GM12878 (cell line): ENCODE measurements at regions of chr5 and their contacts with region 1.

Region 1: GRCh38 chr5:157948738-157949410 is 89.9 kb upstream of the CLINT1 start:
- DNase-seq: peak; percentile 44
- ATAC-seq: peak; percentile 100
- H3K4me3 ChIP-seq: no peak overlapping the region
- H3K27ac ChIP-seq: no peak overlapping the region
- H3K4me1 ChIP-seq: no peaks in the 10 kb centered on the region
- H3K27me3 ChIP-seq: no peaks in the 10 kb centered on the region
- CTCF ChIP-seq: peak; percentile 83 to 94 (median 84)
- EP300 ChIP-seq: no peak
- POLR2A ChIP-seq: no peak
- RAD21 ChIP-seq: peak; percentile 80

Region 2: DNA sequence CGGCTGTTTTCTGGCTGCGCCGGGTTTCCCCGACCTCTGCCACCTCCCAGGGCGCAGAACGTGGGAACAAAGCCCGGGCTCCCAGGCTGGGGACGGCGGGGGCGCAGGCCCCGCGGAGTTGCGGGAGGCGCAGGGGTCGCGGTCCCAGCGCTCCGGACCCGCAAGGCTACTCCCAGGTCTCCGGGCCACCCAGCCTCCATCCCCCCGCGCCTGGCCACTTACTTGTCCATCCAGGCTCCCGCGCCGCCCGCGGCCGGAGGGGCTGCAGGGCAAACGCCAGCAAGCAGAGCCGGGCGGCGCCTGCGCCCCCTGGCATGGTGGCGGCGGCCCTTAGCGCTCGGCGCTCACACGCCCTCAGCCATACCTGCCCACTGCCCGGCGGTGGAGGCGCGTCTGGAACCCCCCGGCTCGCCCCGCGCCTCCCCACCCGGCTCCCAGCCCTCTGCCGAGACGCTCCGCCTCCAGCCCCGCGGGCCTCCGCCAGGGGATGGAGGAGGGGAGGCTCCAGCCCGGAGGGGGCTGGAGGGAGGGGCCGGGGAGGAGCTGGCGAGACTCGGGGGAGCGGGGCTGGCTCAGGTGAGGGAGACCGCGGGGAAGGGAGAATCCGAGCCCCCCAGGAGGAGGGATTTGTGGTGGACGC is 373.4 kb before region 1 on chr5 and contains the start of gene ADAM19:
- CTCF ChIA-PET with region 1: no interaction called
- POLR2A ChIA-PET with region 1: no interaction called
- RAD21 ChIA-PET with region 1: no interaction called
- SMC1A ChIA-PET with region 1: no interaction called
- in situ Hi-C with region 1: no loop called
- intact Hi-C with region 1: no loop called
- DNase-seq: no peak
- ATAC-seq: peak; percentile 77
- H3K4me3 ChIP-seq: peak within 1 kb of the TSS; percentile 75
- H3K27ac ChIP-seq: peak within 1 kb of the TSS; percentile 67
- H3K4me1 ChIP-seq: peaks cover 51% of the 10 kb centered on the region
- H3K27me3 ChIP-seq: no peaks in the 10 kb centered on the region
- CTCF ChIP-seq: no peak
- EP300 ChIP-seq: no peak
- POLR2A ChIP-seq: peak; percentile 79
- RAD21 ChIP-seq: no peak
- polyA plus RNA-seq, gene ADAM19: 16.0 to 24.4 TPM

Region 3: GRCh38 chr5:157761690-157762621 is 186.9 kb before region 1 on chr5:
- CTCF ChIA-PET with region 1: interaction called, 58 read pairs
- POLR2A ChIA-PET with region 1: no interaction called
- RAD21 ChIA-PET with region 1: interaction called, 3 read pairs
- SMC1A ChIA-PET with region 1: interaction called, 19 read pairs
- in situ Hi-C with region 1: no loop called
- intact Hi-C with region 1: loop called (anchors 5 kb)
- DNase-seq: no peak
- ATAC-seq: peak; percentile 99
- H3K4me3 ChIP-seq: no peak overlapping the region
- H3K27ac ChIP-seq: no peak overlapping the region
- H3K4me1 ChIP-seq: 0 out of 2 replicates have a peak, but pooled peaks cover 3% of the 10 kb centered on the region
- H3K27me3 ChIP-seq: no peaks in the 10 kb centered on the region
- CTCF ChIP-seq: peak; percentile 71 to 81 (median 79)
- EP300 ChIP-seq: no peak
- POLR2A ChIP-seq: no peak
- RAD21 ChIP-seq: peak; percentile 73

Region 4: DNA sequence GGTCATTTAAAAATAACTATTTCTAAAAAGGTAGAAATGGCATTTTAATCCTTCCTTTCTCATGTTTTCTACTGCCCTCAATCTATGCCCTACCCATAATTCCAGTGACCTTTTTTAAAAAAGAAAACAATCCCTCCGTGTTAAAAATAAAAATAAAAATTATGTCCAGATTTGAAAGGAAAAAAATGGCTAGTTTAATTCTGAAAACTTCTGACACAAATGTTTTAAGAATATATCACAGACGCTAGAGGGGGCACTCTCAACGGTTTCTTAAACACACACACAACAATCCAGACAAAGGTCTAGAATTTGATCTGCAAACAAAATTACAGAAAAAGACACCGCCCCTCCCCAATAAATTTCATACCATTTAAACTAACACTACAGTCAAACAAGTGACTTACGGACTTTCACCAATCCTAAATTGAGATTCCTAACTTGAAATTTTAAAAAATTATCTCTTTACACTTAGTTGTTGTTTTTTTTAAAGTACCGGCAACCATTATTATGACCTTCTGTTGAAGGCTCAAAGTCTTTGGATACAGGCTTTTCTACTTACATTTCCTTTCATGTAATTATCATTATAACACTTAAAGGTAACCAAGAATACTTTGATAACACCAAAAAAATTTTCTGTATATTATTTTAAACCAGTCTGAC is 128.2 kb before region 1 on chr5:
- CTCF ChIA-PET with region 1: interaction called, 201 read pairs
- POLR2A ChIA-PET with region 1: no interaction called
- RAD21 ChIA-PET with region 1: interaction called, 63 read pairs
- SMC1A ChIA-PET with region 1: interaction called, 82 read pairs
- in situ Hi-C with region 1: loop called (anchors 5 kb)
- intact Hi-C with region 1: loop called (anchors 1 kb)
- DNase-seq: no peak
- ATAC-seq: peak; percentile 69
- H3K4me3 ChIP-seq: no peak overlapping the region
- H3K27ac ChIP-seq: no peak overlapping the region
- H3K4me1 ChIP-seq: no peaks in the 10 kb centered on the region
- H3K27me3 ChIP-seq: no peaks in the 10 kb centered on the region
- CTCF ChIP-seq: peak; percentile 39 to 56 (median 49); a peak in 5 of 6 replicates
- EP300 ChIP-seq: no peak
- POLR2A ChIP-seq: no peak
- RAD21 ChIP-seq: peak; percentile 63

Region 5: DNA sequence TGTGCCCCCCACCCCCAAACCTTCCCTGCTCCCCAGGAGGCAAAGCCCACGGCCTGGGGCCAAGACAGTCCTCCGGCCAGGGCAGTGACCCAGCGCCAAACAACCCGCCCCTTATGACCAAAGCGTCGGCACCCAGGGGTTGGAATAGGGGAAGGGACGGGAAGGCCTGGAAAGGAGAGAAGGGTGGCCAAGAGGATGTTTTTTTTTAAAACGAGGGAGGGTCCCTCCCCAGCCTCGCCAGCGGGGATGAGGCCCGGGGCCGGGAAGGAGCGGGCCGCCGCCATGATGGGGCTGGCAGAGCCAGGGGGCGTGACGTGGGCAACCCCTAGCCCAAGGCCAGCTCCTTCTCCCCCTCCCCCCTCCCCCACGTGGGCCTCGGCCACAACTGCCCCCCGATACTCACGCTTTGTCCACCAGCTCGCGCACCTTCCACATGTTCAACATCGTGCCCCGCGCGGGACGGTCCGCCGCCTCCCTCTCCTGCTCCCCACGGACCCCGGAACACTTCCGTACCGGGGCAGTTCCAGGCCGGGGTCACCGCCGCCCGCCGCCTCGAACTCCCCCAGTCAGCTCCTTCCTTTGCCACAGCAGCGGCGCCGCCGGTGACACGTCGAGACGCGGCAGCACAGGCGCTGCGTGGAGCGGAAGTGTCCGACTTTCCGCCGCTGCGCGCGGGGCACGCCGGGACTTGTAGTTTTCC is 90.2 kb before region 1 on chr5 and contains the start of gene CLINT1:
- CTCF ChIA-PET with region 1: interaction called, 106 read pairs
- POLR2A ChIA-PET with region 1: interaction called, 3 read pairs
- RAD21 ChIA-PET with region 1: interaction called, 66 read pairs
- SMC1A ChIA-PET with region 1: interaction called, 105 read pairs
- in situ Hi-C with region 1: no loop called
- intact Hi-C with region 1: loop called (anchors 1 kb)
- DNase-seq: no peak
- ATAC-seq: peak; percentile 69
- H3K4me3 ChIP-seq: peak within 1 kb of the TSS; percentile 87
- H3K27ac ChIP-seq: peak within 1 kb of the TSS; percentile 45
- H3K4me1 ChIP-seq: peaks cover 29% of the 10 kb centered on the region
- H3K27me3 ChIP-seq: no peaks in the 10 kb centered on the region
- CTCF ChIP-seq: no peak
- EP300 ChIP-seq: 0 out of 4 replicates have a peak, but pooled peaks of 1 of the 2 experiments have one; percentile 4
- POLR2A ChIP-seq: peak; percentile 82
- RAD21 ChIP-seq: no peak
- polyA plus RNA-seq, gene CLINT1: 30.0 to 40.2 TPM

Region 6: GRCh38 chr5:157924931-157925729 is 23.7 kb before region 1 on chr5:
- CTCF ChIA-PET with region 1: interaction called, 21 read pairs
- POLR2A ChIA-PET with region 1: no interaction called
- RAD21 ChIA-PET with region 1: interaction called, 27 read pairs
- SMC1A ChIA-PET with region 1: interaction called, 13 read pairs
- in situ Hi-C with region 1: no loop called
- intact Hi-C with region 1: no loop called
- DNase-seq: no peak
- ATAC-seq: peak; percentile 37
- H3K4me3 ChIP-seq: no peak overlapping the region
- H3K27ac ChIP-seq: no peak overlapping the region
- H3K4me1 ChIP-seq: no peaks in the 10 kb centered on the region
- H3K27me3 ChIP-seq: no peaks in the 10 kb centered on the region
- CTCF ChIP-seq: no peak
- EP300 ChIP-seq: no peak
- POLR2A ChIP-seq: no peak
- RAD21 ChIP-seq: no peak

Region 7: GRCh38 chr5:157961828-157962590 is 13.1 kb after region 1 on chr5:
- CTCF ChIA-PET with region 1: interaction called, 14 read pairs
- POLR2A ChIA-PET with region 1: no interaction called
- RAD21 ChIA-PET with region 1: interaction called, 5 read pairs
- SMC1A ChIA-PET with region 1: interaction called, 6 read pairs
- in situ Hi-C with region 1: no loop called
- intact Hi-C with region 1: no loop called
- DNase-seq: no peak
- ATAC-seq: no peak
- H3K4me3 ChIP-seq: no peak overlapping the region
- H3K27ac ChIP-seq: no peak overlapping the region
- H3K4me1 ChIP-seq: no peaks in the 10 kb centered on the region
- H3K27me3 ChIP-seq: no peaks in the 10 kb centered on the region
- CTCF ChIP-seq: no peak
- EP300 ChIP-seq: no peak
- POLR2A ChIP-seq: no peak
- RAD21 ChIP-seq: no peak